ENCODE measurements at regions of chr20 and their contacts with region 1.

Region 1: DNA sequence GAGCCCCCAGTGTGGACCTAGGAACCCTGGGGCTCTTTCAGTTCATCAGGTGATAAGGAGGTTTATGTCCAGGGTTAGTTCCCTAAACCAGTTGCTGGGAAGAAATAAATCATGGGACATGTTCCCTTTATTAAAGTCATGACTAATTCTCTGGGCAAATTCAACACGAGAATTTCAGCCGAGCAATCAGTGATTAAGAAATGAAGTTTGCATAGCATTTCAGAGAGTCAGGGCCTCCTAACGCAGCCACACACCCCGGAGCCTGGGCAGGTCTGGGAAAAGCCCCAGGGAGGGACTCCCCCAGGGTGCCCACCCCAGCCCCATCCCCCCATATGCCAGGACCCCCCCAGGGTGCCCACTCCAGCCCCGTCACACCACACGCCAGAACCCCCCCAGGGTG is 20.1 kb downstream of the SLCO4A1 start:
- H3K4me3 Mint-ChIP-seq: no peak overlapping the region
- H3K27ac Mint-ChIP-seq: peak overlapping the region; percentile 86
- H3K4me1 Mint-ChIP-seq: peaks cover 83% of the 10 kb centered on the region
- H3K27me3 Mint-ChIP-seq: peaks cover 6% of the 10 kb centered on the region

Region 2: GRCh38 chr20:62485062-62485700 is 177.2 kb before region 1 on chr20:
- intact Hi-C with region 1: no loop called
- H3K4me3 Mint-ChIP-seq: no peak overlapping the region
- H3K27ac Mint-ChIP-seq: no peak overlapping the region
- H3K4me1 Mint-ChIP-seq: peaks cover 10% of the 10 kb centered on the region
- H3K27me3 Mint-ChIP-seq: peaks cover 91% of the 10 kb centered on the region

Region 3: GRCh38 chr20:62652051-62652926 is 10.1 kb before region 1 on chr20:
- intact Hi-C with region 1: loop called (anchors 1 kb)
- H3K4me3 Mint-ChIP-seq: peak overlapping the region; percentile 60
- H3K27ac Mint-ChIP-seq: peak overlapping the region; percentile 94
- H3K4me1 Mint-ChIP-seq: peaks cover 42% of the 10 kb centered on the region
- H3K27me3 Mint-ChIP-seq: peaks cover 8% of the 10 kb centered on the region